Natural killer cell (primary cell): ENCODE measurements at regions of chr11 and their contacts with region 1.

Region 1: GRCh38 chr11:30304620-30305019 is 18.3 kb upstream of the ARL14EP start:
- DNase-seq: no peak
- ATAC-seq: no peak
- H3K4me3 ChIP-seq: no peak overlapping the region
- H3K4me3 Mint-ChIP-seq: no peak overlapping the region
- H3K27ac ChIP-seq: no peak overlapping the region
- H3K27ac Mint-ChIP-seq: no peak overlapping the region
- H3K4me1 ChIP-seq: no peaks in the 10 kb centered on the region
- H3K4me1 Mint-ChIP-seq: no peaks in the 10 kb centered on the region
- H3K27me3 ChIP-seq: no peaks in the 10 kb centered on the region
- H3K27me3 Mint-ChIP-seq: peaks cover 0 to 5% of the 10 kb centered on the region in 2 donors
- CTCF ChIP-seq: no peak

Region 2: GRCh38 chr11:30282289-30282631 is 22.4 kb before region 1 on chr11:
- intact Hi-C with region 1: no loop called
- DNase-seq: peak; percentile 19 to 26
- ATAC-seq: peak; percentile 36 to 68 (median 64)
- H3K4me3 ChIP-seq: no peak overlapping the region
- H3K4me3 Mint-ChIP-seq: peak overlapping the region; percentile 60
- H3K27ac ChIP-seq: peak overlapping the region; percentile 31
- H3K27ac Mint-ChIP-seq: peak overlapping the region; percentile 70 to 85
- H3K4me1 ChIP-seq: peaks cover 16% of the 10 kb centered on the region
- H3K4me1 Mint-ChIP-seq: peaks cover 28 to 40% of the 10 kb centered on the region in 2 donors
- H3K27me3 ChIP-seq: no peaks in the 10 kb centered on the region
- H3K27me3 Mint-ChIP-seq: no peaks in the 10 kb centered on the region
- CTCF ChIP-seq: no peak

Region 3: GRCh38 chr11:30365793-30366517 is 61.3 kb after region 1 on chr11:
- intact Hi-C with region 1: loop called (anchors 10 kb)
- DNase-seq: no peak
- ATAC-seq: no peak
- H3K4me3 ChIP-seq: no peak overlapping the region
- H3K4me3 Mint-ChIP-seq: no peak overlapping the region
- H3K27ac ChIP-seq: no peak overlapping the region
- H3K27ac Mint-ChIP-seq: no peak overlapping the region
- H3K4me1 ChIP-seq: no peaks in the 10 kb centered on the region
- H3K4me1 Mint-ChIP-seq: no peaks in the 10 kb centered on the region
- H3K27me3 ChIP-seq: no peaks in the 10 kb centered on the region
- H3K27me3 Mint-ChIP-seq: peaks cover 10 to 12% of the 10 kb centered on the region in 2 donors
- CTCF ChIP-seq: no peak